Panc1 (cell line): ENCODE measurements at regions of chr11 and their contacts with region 1.

Region 1: DNA sequence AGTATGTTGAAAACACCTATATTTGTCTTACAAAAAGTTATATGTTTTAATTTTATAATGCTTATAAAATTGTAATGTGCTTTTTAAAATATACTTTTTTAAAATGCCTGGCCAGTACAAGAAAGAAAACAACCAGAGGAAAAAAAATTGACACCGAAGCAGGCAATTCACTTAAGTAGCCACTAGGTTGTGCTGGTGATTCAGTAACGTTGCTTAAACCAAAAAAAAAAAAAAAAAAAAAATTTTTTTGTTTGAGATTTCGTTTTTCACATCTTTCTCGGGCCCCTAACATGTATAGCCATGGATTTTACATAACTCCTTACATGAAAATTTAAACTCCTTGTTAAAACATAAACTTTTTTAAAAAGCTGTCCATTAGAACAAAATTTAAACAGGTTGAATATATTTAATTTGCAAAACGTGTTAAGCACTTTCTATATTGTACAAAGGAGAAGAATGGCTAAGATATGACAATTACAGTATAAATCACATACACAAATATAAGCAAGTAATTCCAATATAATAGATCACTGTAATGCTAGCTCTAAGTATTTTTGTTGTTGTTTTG is 9.2 kb downstream of the OR8B4 start:
- DNase-seq: peak; percentile 12
- ATAC-seq: no peak
- H3K4me3 ChIP-seq: no peak overlapping the region
- H3K27ac ChIP-seq: no peak overlapping the region
- H3K4me1 ChIP-seq: no peaks in the 10 kb centered on the region
- H3K27me3 ChIP-seq: peaks cover 17% of the 10 kb centered on the region
- CTCF ChIP-seq: peak; percentile 78; the same call in 1 of the 2 replicates

Region 2: DNA sequence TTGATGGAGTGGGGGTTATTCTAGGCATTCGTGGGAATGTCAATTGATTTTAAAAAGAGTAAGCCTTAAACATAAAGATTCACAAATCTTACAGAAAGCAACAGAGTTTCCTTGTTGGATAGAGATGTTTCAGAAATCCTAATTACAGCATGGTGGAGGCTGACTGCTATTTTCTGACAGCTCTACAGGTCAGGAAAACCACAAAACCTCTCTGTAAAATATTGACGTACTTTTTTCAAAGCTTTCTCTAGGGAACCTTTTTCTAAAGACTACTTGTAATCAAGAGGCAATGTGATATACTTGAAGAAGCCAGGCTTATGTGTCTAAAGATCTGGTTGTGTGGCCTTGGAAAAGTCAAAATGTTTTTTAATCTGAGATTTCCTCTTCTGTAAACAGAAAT is 39.1 kb after region 1 on chr11:
- CTCF ChIA-PET with region 1: no interaction called
- POLR2A ChIA-PET with region 1: no interaction called
- in situ Hi-C with region 1: no loop called
- intact Hi-C with region 1: no loop called
- DNase-seq: no peak
- ATAC-seq: no peak
- H3K4me3 ChIP-seq: no peak overlapping the region
- H3K27ac ChIP-seq: no peak overlapping the region
- H3K4me1 ChIP-seq: no peaks in the 10 kb centered on the region
- H3K27me3 ChIP-seq: no peaks in the 10 kb centered on the region
- CTCF ChIP-seq: no peak

Region 3: DNA sequence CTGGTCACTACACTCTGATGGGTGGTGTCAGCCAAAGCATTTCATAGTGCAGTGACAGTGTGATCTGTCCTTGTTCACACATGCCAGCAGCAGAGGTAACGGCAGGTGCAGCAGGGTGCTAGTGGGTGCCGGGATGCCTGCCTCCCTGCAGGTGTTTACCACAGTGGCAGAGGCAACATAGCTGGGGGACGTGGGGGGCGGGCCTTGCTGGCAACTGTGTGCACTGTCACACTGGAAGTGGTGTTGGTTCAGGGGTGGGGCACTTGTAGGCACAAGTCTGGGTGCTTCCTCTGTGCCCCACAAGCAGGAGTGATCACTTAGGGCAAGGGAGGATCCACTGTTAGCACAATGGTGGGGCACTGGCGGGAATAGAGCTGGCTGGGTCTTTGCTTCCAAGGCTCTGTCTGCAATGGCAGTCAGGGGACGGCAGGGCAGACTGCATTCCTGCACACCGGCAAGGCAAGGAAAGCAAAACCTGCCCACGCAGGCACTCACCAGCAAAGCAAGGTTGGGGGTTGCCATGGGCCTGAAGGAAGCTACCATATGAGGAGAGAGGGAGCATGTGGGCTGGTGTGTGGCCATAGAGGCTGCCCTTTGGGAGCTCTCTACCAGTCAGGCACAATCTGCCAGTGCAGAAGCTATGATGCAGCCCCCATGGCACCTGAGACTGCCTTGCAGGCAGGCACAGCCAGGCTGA is 94.7 kb after region 1 on chr11:
- CTCF ChIA-PET with region 1: no interaction called
- POLR2A ChIA-PET with region 1: no interaction called
- in situ Hi-C with region 1: no loop called
- intact Hi-C with region 1: no loop called
- DNase-seq: no peak
- ATAC-seq: no peak
- H3K4me3 ChIP-seq: no peak overlapping the region
- H3K27ac ChIP-seq: no peak overlapping the region
- H3K4me1 ChIP-seq: no peaks in the 10 kb centered on the region
- H3K27me3 ChIP-seq: 0 out of 2 replicates have a peak, but pooled peaks cover 5% of the 10 kb centered on the region
- CTCF ChIP-seq: no peak

Region 4: DNA sequence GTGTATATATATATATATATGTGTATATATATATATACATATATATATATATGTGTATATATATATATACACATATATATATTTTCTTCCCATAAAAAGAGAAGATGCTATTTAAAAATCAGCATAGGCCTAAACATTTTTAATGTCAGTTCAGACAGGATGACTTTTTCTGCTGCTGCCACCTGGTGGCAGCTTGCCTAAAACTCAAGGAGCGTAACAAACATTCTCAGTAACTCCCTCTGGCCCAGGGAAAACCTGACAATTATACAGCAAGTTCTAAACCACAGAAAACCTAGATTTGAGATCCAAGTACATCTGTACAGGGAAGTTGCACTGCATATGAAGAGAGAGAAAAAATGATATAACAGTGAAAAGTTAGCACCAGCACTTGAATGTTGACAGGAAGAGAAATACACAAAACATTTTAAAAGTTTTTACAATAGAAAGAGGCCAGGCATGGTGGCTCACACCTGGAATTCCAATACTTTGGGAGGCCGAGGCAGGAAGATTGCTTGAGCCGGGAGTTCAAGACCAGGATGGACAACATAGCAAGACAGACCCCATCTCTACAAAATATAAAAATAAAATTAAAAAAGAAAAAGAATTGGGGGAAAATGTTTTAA is 170.9 kb after region 1 on chr11:
- CTCF ChIA-PET with region 1: interaction called, 3 read pairs
- POLR2A ChIA-PET with region 1: no interaction called
- in situ Hi-C with region 1: no loop called
- intact Hi-C with region 1: loop called (anchors 1 kb)
- DNase-seq: peak; percentile 47
- ATAC-seq: peak; percentile 85; the same call in 1 of the 2 replicates
- H3K4me3 ChIP-seq: no peak overlapping the region
- H3K27ac ChIP-seq: no peak overlapping the region
- H3K4me1 ChIP-seq: no peaks in the 10 kb centered on the region
- H3K27me3 ChIP-seq: peaks cover 5% of the 10 kb centered on the region
- CTCF ChIP-seq: peak; percentile 71